Activated T-helper 2 cell treated with anti-CD3 and anti-CD28 coated beads, Interferon-gamma antibody, Interleukin-2, Interleukin-4, amounts not matched to agents 10 μg/mL and 5 μg/mL and 100 μg/mL, durations not matched to agents 14 hours and 24 hours and 36 hours (primary cell): ENCODE measurements at regions of chr11 and their contacts with region 1.

Region 1: GRCh38 chr11:31810779-31811647 is at the start of gene PAX6:
- DNase-seq: no peak
- H3K4me3 Mint-ChIP-seq: peak within 1 kb of the TSS; percentile 27
- H3K27ac Mint-ChIP-seq: peak within 1 kb of the TSS; percentile 54
- H3K4me1 Mint-ChIP-seq: peaks cover 14% of the 10 kb centered on the region
- H3K27me3 Mint-ChIP-seq: peaks cover 75% of the 10 kb centered on the region
- total RNA-seq, gene PAX6: not detected in 2 replicates

Region 2: DNA sequence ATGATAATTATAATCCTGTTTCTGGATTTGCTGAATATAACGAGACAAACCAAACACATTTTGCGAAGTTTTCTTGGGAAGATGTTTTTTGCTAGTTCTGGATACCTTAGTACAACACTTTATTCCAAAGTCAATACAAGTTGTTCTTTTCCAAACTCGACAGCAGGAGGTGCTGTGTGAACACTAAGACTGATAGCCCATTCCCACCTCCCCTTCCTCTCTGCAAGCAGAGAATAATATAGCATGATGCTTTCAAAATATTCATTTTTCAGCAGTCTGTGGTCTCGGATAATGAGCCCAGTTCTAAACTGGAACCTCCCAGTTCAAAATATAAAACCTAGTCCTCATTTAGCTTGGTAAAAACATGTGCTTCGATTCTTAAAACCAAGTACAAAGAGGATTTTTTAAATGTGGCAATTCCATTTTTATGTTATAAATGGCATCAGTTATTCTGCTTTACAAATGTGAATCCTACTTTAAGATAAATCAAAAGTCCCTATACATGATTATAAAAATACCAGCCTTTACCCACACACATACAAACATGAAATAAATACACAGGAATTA is 570.6 kb before region 1 on chr11:
- intact Hi-C with region 1: loop called (anchors 10 kb)
- DNase-seq: no peak
- H3K4me3 Mint-ChIP-seq: no peak overlapping the region
- H3K27ac Mint-ChIP-seq: no peak overlapping the region
- H3K4me1 Mint-ChIP-seq: no peaks in the 10 kb centered on the region
- H3K27me3 Mint-ChIP-seq: no peaks in the 10 kb centered on the region

Region 3: DNA sequence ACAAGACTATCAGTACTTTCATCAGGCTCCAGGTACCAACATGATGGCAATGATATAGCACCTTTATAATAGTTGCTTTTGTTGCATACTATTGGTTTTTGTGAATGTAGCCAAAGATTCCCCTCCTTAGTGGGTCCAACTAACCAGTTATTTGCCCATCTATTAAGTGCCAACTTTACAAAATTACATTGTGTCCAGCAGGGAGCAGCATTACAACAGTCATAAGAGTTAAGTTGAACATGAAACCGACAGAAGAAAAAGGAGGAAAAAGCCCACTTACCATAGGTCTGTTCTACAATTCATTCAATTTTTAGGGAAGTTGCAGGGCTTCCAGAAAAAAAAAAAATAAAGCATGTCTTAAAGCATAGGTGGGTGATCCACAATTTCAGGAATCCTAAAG is 323.2 kb before region 1 on chr11:
- intact Hi-C with region 1: loop called (anchors 10 kb)
- DNase-seq: no peak
- H3K4me3 Mint-ChIP-seq: no peak overlapping the region
- H3K27ac Mint-ChIP-seq: no peak overlapping the region
- H3K4me1 Mint-ChIP-seq: peaks cover 20% of the 10 kb centered on the region
- H3K27me3 Mint-ChIP-seq: no peaks in the 10 kb centered on the region

Region 4: DNA sequence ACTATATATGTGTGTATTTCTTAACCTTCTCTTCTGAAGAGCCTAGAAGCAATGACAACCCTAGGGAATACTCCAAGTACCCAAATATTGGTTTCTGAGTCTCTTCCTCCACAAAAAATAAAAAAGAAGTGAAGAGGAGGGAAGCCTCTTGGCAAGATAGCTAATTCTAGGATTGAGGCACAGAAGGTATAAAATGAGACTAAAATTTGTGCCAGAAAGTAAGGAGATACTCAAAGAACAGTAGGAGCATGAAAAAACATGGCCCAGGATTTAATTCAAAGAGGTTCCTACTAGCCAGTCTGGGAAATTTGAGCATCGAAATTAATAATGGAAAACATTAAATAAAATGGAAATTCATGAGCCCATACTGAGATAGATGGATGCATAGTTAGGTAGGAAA is 111.9 kb before region 1 on chr11:
- intact Hi-C with region 1: no loop called
- DNase-seq: no peak
- H3K4me3 Mint-ChIP-seq: no peak overlapping the region
- H3K27ac Mint-ChIP-seq: no peak overlapping the region
- H3K4me1 Mint-ChIP-seq: no peaks in the 10 kb centered on the region
- H3K27me3 Mint-ChIP-seq: peaks cover 5% of the 10 kb centered on the region

Region 5: GRCh38 chr11:31856248-31856647 is 45.2 kb after region 1 on chr11:
- intact Hi-C with region 1: no loop called
- DNase-seq: no peak
- H3K4me3 Mint-ChIP-seq: no peak overlapping the region
- H3K27ac Mint-ChIP-seq: no peak overlapping the region
- H3K4me1 Mint-ChIP-seq: no peaks in the 10 kb centered on the region
- H3K27me3 Mint-ChIP-seq: peaks cover 5% of the 10 kb centered on the region